ENCODE measurements at regions of chr4 and their contacts with region 1.

Region 1: GRCh38 chr4:184273166-184274147 is 55.8 kb upstream of the ENPP6 start:
- DNase-seq: no peak
- H3K4me3 ChIP-seq: no peak overlapping the region
- H3K27ac ChIP-seq: no peak overlapping the region
- H3K4me1 ChIP-seq: no peaks in the 10 kb centered on the region
- H3K27me3 ChIP-seq: no peaks in the 10 kb centered on the region
- CTCF ChIP-seq: no peak
- POLR2A ChIP-seq: no peak

Region 2: DNA sequence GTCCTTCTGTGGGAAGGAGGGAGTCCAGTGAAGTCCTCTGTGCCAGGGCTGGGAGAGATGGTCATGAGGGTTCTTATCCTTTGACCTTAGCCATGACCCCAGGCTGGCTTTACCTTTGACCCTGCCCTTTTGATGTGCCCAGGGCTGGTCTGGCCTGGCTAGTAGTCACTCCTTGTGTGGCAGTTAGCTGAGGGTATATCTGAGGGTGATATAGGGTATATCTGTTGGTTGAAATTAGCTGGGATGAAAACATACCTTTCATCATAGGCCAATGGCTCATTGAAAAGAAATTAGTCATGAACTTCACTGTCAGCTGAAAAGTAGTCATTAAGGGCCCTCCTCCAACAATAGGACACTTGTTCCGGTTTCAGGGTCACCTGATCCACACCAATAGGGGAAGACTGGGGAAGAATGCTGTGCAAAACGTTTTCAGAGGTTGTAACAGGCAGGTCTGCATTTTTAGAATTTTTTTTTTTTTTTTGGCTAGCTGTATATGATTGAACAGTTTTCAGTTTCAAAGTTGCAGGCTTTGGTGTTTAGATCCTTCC is 442.9 kb before region 1 on chr4:
- intact Hi-C with region 1: no loop called
- DNase-seq: no peak
- H3K4me3 ChIP-seq: no peak overlapping the region
- H3K27ac ChIP-seq: peak overlapping the region; percentile 1 to 64
- H3K4me1 ChIP-seq: no peaks in the 10 kb centered on the region
- H3K27me3 ChIP-seq: no peaks in the 10 kb centered on the region
- CTCF ChIP-seq: no peak
- POLR2A ChIP-seq: no peak

Region 3: DNA sequence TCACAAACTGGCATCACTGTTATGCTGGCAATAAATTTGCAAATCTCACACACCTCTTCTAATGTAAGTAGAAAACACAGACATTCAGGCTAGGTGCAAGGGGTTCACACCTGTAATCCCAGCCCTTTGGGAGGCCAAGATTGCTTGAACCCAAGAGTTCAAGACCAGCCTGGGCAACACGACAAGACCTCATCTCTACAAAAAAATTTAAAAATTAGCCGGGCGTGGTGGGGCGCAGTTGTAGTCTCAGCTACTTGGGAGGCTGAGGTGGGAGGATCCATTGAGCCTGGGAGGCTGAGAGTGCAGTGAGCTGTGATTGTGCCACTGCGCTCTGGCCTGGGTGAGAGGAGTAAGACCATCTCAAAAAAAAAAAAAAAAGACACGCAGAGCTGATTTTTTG is 27.4 kb after region 1 on chr4:
- intact Hi-C with region 1: no loop called
- DNase-seq: no peak
- H3K4me3 ChIP-seq: no peak overlapping the region
- H3K27ac ChIP-seq: no peak overlapping the region
- H3K4me1 ChIP-seq: no peaks in the 10 kb centered on the region
- H3K27me3 ChIP-seq: no peaks in the 10 kb centered on the region
- CTCF ChIP-seq: no peak
- POLR2A ChIP-seq: no peak

Region 4: DNA sequence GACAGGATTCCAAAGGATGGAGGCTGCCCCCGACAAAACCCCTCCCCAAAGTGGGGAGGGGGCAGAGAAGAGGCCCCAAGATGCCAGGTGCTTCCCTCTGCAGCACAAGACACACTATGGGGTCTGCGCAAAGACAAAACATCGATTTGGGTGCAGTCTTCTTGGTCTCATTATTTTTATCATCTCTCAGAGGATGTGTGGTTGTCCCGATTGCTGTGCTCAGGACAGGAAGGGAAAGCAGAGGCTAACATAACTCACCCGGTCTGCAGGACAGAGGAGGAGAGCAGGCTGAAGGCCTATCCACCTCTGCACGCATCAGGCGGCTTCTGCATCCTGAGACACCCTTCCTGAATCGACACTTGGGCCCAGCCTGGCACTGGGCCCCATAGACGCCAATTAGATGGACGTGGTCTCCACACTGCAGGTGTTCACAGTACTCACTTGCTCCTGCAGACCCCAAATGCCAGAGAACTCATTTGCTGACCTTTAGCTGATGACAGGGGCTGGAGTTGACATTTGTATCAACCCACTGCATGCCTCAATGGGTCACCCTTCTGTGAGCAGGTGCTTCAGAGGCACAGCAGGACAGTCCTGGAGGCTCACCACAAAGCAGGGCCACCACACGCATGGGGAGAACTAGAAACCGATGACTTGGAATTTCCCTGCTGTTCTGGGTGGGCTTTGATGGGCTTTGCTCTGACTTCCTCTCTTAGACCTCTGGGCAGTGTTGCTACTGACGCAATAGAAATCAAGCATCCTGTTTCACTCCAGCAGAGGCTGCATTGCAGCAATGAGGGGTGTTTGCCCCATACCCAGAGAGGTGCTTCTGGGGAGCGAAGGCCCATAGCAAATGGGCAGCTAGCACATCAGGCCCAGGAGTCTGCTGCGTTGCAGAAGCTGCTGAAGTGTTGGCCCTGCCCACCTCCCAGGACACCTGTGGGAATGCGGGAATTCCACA is 40.5 kb after region 1 on chr4:
- intact Hi-C with region 1: no loop called
- DNase-seq: no peak
- H3K4me3 ChIP-seq: no peak overlapping the region
- H3K27ac ChIP-seq: no peak overlapping the region
- H3K4me1 ChIP-seq: no peaks in the 10 kb centered on the region
- H3K27me3 ChIP-seq: no peaks in the 10 kb centered on the region
- CTCF ChIP-seq: no peak
- POLR2A ChIP-seq: no peak

Region 5: GRCh38 chr4:184529283-184529682 is 255.8 kb after region 1 on chr4:
- intact Hi-C with region 1: loop called (anchors 5 kb)
- DNase-seq: peak in 1 of 2 donors; percentile 67
- H3K4me3 ChIP-seq: no peak overlapping the region
- H3K27ac ChIP-seq: peak overlapping the region; percentile 22 to 61
- H3K4me1 ChIP-seq: peaks cover 0 to 3% of the 10 kb centered on the region in 2 donors
- H3K27me3 ChIP-seq: no peaks in the 10 kb centered on the region
- CTCF ChIP-seq: no peak
- POLR2A ChIP-seq: no peak